IMR-90 (cell line): ENCODE measurements at regions of chr3 and their contacts with region 1.

Region 1: GRCh38 chr3:169149349-169149890 is 514.1 kb downstream of the MECOM start:
- DNase-seq: peak; percentile 80
- ATAC-seq: peak; percentile 82
- H3K4me3 ChIP-seq: peak overlapping the region; percentile 43
- H3K27ac ChIP-seq: peak overlapping the region; percentile 59; the same call in 1 of the 2 replicates
- H3K4me1 ChIP-seq: peaks cover 2% of the 10 kb centered on the region; the same call in 1 of the 2 replicates
- H3K27me3 ChIP-seq: no peaks in the 10 kb centered on the region
- CTCF ChIP-seq: peak; percentile 91
- POLR2A ChIP-seq: no peak
- RAD21 ChIP-seq: peak; percentile 79

Region 2: GRCh38 chr3:168865022-168865551 is 284.3 kb before region 1 on chr3:
- CTCF ChIA-PET with region 1: no interaction called
- POLR2A ChIA-PET with region 1: interaction called, 3 read pairs
- dilution Hi-C with region 1: no loop called
- in situ Hi-C with region 1: no loop called
- intact Hi-C with region 1: loop called (anchors 2 kb)
- DNase-seq: peak; percentile 48
- ATAC-seq: peak; percentile 44; the same call in 1 of the 2 replicates
- H3K4me3 ChIP-seq: no peak overlapping the region
- H3K27ac ChIP-seq: no peak overlapping the region
- H3K4me1 ChIP-seq: no peaks in the 10 kb centered on the region
- H3K27me3 ChIP-seq: no peaks in the 10 kb centered on the region
- CTCF ChIP-seq: peak; percentile 76
- POLR2A ChIP-seq: no peak
- RAD21 ChIP-seq: peak; percentile 66

Region 3: GRCh38 chr3:169020356-169020755 is 129.1 kb before region 1 on chr3:
- CTCF ChIA-PET with region 1: no interaction called
- POLR2A ChIA-PET with region 1: no interaction called
- dilution Hi-C with region 1: no loop called
- in situ Hi-C with region 1: no loop called
- intact Hi-C with region 1: no loop called
- DNase-seq: no peak
- ATAC-seq: no peak
- H3K4me3 ChIP-seq: no peak overlapping the region
- H3K27ac ChIP-seq: no peak overlapping the region
- H3K4me1 ChIP-seq: no peaks in the 10 kb centered on the region
- H3K27me3 ChIP-seq: no peaks in the 10 kb centered on the region
- CTCF ChIP-seq: no peak
- POLR2A ChIP-seq: no peak
- RAD21 ChIP-seq: no peak

Region 4: DNA sequence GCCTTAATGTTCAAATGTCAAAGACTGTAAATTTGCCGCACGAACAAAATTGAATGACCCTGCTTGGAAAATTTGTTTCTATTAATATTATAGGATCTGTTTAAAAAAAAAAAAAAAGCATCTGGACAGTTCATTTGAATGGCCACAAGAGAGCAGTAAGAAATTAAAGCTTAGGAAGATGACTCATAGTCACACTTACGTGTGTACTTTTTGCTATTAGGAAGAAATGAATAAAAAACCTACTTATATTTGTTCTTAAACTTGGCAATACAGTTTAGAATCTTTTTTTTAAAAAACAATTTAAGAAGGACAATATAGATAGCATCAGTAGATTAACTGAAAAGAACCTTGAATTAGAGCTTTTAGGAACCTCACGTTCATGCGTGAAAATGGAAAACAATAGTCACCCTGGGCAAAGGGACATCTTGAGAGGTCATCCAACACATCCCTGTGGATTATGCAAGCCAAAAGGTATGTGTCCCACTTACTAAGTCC is 107.7 kb before region 1 on chr3:
- CTCF ChIA-PET with region 1: interaction called, 6 read pairs
- POLR2A ChIA-PET with region 1: no interaction called
- dilution Hi-C with region 1: no loop called
- in situ Hi-C with region 1: no loop called
- intact Hi-C with region 1: loop called (anchors 1 kb)
- DNase-seq: peak; percentile 80
- ATAC-seq: peak; percentile 68
- H3K4me3 ChIP-seq: no peak overlapping the region
- H3K27ac ChIP-seq: no peak overlapping the region
- H3K4me1 ChIP-seq: peaks cover 2% of the 10 kb centered on the region; the same call in 1 of the 2 replicates
- H3K27me3 ChIP-seq: no peaks in the 10 kb centered on the region
- CTCF ChIP-seq: peak; percentile 74
- POLR2A ChIP-seq: no peak
- RAD21 ChIP-seq: peak; percentile 63

Region 5: DNA sequence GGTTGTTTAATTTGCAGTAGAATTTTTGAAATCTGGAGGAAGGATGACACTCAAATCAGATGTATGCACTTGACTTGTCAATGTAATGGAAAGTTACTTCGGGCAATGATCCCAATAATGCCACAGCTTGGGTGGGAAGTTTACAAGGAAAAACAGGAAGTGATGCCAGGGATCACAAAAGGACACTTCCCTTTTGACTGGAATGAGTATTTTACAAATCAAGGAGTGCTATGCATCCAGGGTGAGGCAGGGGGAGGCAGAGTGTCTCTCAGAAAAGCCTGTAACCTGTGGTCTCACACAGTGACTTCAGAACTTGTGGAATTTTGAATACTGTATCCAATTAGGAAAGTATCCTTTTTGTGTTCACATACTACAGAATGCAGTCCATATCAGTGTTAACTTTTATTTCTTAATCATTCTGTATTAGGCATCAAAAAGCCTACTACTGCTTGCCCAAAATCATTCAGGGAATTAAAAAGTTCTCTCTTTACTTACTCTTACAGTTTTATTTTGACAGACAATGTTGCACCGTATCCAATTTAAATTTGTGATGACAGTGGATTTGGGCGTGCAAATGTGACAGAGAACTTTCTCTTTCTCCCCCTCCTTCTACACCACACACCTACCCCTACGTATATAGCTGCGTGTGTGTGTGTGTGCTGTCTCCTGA is 69.0 kb after region 1 on chr3:
- CTCF ChIA-PET with region 1: interaction called, 3 read pairs
- POLR2A ChIA-PET with region 1: no interaction called
- dilution Hi-C with region 1: no loop called
- in situ Hi-C with region 1: no loop called
- intact Hi-C with region 1: loop called (anchors 2 kb)
- DNase-seq: peak; percentile 71
- ATAC-seq: peak; percentile 95
- H3K4me3 ChIP-seq: no peak overlapping the region
- H3K27ac ChIP-seq: no peak overlapping the region
- H3K4me1 ChIP-seq: no peaks in the 10 kb centered on the region
- H3K27me3 ChIP-seq: no peaks in the 10 kb centered on the region
- CTCF ChIP-seq: peak; percentile 85
- POLR2A ChIP-seq: no peak
- RAD21 ChIP-seq: peak; percentile 88

Region 6: DNA sequence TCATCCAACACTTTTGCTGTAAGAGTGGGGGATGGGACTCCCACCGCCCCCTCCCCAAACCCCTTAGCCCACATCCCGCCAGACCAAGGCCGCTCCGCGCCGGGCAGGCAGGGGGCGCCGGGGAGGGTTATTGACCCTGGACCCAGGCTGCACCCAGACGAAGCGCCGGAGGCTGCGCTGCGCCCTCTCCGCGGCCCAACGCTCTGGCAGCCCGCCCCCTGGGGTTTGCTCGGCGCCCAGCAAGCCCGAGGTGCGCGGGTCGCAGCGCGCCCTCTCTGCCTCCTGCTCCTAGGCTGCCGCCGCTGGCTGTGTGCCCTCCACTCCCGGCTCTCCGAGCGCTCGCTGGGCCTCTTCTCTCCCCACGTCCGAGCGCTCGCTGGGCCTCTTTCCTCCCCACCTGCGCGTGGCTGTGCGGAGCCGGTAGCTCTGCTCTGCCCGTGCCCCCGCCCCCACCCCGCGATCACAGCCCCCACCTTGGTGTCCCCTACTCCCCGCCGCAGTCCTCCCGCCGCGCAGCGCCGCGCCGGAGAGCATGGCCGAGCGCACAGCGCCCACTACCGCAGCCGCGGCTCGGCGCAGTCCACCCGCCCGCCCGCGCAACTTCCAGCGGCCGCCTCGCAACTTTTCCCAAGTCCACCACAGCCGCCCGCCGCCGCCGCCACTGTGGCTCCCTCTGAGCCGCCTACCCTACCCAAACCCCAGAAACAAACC is 512.9 kb after region 1 on chr3:
- CTCF ChIA-PET with region 1: interaction called, 6 read pairs
- POLR2A ChIA-PET with region 1: no interaction called
- dilution Hi-C with region 1: no loop called
- in situ Hi-C with region 1: no loop called
- intact Hi-C with region 1: loop called (anchors 1 kb)
- DNase-seq: peak; percentile 57
- ATAC-seq: peak; percentile 86
- H3K4me3 ChIP-seq: peak overlapping the region; percentile 68
- H3K27ac ChIP-seq: peak overlapping the region; percentile 36
- H3K4me1 ChIP-seq: no peaks in the 10 kb centered on the region
- H3K27me3 ChIP-seq: peaks cover 35% of the 10 kb centered on the region
- CTCF ChIP-seq: peak; percentile 60
- POLR2A ChIP-seq: no peak
- RAD21 ChIP-seq: peak; percentile 61

Region 7: DNA sequence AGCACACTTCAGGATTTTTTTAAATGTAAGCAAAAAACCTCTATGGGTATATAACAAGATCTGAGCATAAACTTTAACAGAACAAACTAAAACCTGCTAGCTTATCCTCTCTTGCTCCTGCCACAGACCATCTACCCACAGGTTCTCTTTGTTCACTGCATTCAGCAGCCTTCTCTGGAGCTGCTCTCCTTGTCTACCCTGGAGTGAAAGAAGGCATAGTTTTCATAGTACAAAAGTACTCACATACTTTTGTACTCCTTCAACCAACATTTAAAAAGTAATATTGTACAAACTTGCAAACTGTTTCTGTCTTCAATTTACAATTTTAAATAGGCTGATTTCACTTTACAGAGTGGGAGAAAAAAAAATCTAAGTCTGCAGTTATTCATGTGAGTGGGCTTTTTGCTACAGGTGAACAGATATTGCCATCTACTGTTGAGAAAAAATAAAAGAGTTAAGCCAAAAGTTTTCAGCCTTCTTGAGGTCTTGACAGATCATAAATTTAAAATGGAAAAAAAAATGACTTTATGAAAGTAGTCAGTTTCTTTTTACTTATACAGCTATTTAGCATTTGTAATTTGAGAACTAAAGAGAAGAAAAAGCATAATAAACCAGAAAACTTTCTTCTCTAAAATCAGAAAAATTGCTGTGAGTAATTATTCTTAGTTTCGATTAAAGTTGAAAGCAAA is 595.1 kb after region 1 on chr3:
- CTCF ChIA-PET with region 1: no interaction called
- POLR2A ChIA-PET with region 1: no interaction called
- dilution Hi-C with region 1: no loop called
- in situ Hi-C with region 1: no loop called
- intact Hi-C with region 1: loop called (anchors 1 kb)
- DNase-seq: peak; percentile 22
- ATAC-seq: 0 out of 2 replicates have a peak, but pooled peaks have one; percentile 24
- H3K4me3 ChIP-seq: no peak overlapping the region
- H3K27ac ChIP-seq: no peak overlapping the region
- H3K4me1 ChIP-seq: no peaks in the 10 kb centered on the region
- H3K27me3 ChIP-seq: peaks cover 5% of the 10 kb centered on the region
- CTCF ChIP-seq: peak; percentile 55
- POLR2A ChIP-seq: no peak
- RAD21 ChIP-seq: peak; percentile 64

Region 8: GRCh38 chr3:170387950-170388349 is 1238.5 kb after region 1 on chr3:
- CTCF ChIA-PET with region 1: no interaction called
- POLR2A ChIA-PET with region 1: no interaction called
- dilution Hi-C with region 1: no loop called
- in situ Hi-C with region 1: no loop called
- intact Hi-C with region 1: no loop called
- DNase-seq: peak; percentile 11
- ATAC-seq: no peak
- H3K4me3 ChIP-seq: no peak overlapping the region
- H3K27ac ChIP-seq: no peak overlapping the region
- H3K4me1 ChIP-seq: no peaks in the 10 kb centered on the region
- H3K27me3 ChIP-seq: no peaks in the 10 kb centered on the region
- CTCF ChIP-seq: no peak; the same call in 1 of the 2 replicates
- POLR2A ChIP-seq: no peak
- RAD21 ChIP-seq: no peak